ENCODE measurements at regions of chr7 and their contacts with region 1.

Region 1: DNA sequence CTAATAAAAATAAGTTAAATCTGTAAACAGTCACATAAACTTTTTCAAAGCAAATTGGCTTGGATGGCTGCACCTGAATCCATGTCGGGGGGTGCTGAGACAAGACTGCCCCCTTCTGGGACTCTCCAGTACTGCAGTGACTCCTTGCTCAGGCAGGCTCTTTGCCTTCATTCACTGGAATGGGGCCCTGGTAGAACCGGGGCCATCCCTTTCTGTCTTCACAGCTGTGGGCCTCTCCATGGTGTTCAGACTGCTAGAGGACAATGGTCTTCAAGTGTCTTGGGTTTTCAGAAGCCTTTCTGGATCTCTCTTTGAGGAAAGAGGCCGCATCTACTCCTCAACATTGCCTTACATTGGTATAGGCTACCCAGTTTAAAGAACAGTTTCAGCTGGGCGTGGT is 16.1 kb upstream of the IMPDH1 start:
- DNase-seq: peak; percentile 64 to 80 (median 66)
- H3K4me3 ChIP-seq: no peak overlapping the region
- H3K27ac ChIP-seq: no peak overlapping the region
- H3K4me1 ChIP-seq: peaks cover 0 to 10% (median 0%) of the 10 kb centered on the region in 4 experiments
- H3K27me3 ChIP-seq: no peaks in the 10 kb centered on the region

Region 2: DNA sequence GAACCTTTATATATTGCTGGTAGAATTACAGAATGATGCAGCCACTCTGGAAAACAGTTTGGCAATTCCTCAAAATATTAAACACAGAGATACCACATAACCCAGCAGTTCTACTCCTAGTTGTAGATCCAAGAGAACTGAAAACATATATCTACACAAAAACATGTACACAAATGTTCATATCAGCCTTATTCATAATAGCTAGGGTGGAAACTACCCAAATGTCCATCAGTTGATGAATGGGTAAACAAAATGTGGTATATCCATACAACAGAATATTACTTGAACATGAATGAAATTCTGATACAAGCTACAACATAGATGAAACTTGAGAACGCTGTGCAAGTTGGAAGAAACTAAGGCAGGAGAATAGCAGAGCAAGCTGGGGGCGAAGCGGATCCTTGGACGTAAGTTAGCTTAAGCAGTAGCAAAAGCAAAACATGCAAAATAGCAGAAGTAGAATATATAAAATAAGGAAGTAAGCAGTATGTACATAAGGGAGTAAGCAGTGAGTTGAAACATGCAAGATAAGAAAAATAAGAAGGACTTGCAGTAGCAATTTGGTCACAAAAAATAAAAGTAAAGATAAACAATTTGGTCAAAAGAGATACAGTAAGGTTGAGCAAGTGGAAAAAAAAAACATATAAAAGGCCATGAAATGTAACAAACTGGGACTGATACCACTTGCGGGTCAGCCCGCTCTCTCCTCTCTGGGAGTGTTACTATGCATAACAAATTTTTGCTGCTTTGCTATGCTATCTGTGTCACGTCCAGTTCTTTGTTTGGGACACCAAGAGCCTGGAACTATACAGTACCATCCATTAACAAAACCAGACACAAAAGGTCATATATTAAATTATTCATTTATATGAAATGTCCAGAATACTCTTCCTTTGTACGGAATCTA is 11.8 kb after region 1 on chr7:
- CTCF ChIA-PET with region 1: interaction called, 51 read pairs
- POLR2A ChIA-PET with region 1: no interaction called
- DNase-seq: peak in 2 of 3 donors; percentile 52 to 66
- H3K4me3 ChIP-seq: no peak overlapping the region
- H3K27ac ChIP-seq: peak overlapping the region in 1 of 2 experiments; percentile 63
- H3K4me1 ChIP-seq: peaks cover 0 to 9% (median 5%) of the 10 kb centered on the region in 4 experiments
- H3K27me3 ChIP-seq: no peaks in the 10 kb centered on the region

Region 3: DNA sequence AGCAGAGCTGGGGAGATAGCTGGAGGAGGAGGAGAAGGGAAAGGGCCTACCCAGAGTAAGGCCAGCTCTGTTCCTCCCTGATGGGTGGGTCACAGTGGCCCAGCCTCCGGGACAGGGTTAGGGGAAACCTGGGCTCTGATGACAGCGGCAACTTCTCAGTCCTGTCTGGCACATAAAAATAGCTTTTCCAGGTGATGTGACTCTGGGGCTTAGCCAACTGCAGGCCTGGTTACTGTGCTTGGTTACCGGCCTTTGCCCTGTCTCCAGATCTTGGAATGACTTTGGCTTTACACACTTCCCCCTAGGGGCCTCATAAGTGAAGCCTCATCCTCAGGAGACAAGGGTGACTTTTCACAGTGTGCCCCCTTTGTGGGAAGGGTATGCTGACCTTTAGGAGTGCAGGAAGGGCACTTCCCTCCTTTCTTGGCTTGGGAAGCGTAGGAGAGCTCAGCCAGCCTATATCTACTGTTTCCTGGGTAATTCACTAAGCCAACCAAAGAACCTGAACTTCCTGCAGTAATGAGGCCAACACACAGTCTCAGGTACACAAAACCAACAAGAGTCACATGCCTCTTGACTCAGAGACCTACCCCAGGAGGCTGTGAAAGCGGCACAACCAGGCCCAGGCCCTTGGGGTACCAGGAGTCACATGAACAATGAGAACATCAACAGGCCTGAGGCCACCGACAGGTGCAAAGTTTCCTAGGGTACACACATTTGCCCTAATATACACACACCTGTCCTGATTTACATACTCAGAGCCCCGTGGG is 18.2 kb after region 1 on chr7:
- CTCF ChIA-PET with region 1: interaction called, 51 read pairs
- POLR2A ChIA-PET with region 1: no interaction called
- DNase-seq: no peak
- H3K4me3 ChIP-seq: no peak overlapping the region
- H3K27ac ChIP-seq: no peak overlapping the region
- H3K4me1 ChIP-seq: no peaks in the 10 kb centered on the region
- H3K27me3 ChIP-seq: no peaks in the 10 kb centered on the region

Region 4: DNA sequence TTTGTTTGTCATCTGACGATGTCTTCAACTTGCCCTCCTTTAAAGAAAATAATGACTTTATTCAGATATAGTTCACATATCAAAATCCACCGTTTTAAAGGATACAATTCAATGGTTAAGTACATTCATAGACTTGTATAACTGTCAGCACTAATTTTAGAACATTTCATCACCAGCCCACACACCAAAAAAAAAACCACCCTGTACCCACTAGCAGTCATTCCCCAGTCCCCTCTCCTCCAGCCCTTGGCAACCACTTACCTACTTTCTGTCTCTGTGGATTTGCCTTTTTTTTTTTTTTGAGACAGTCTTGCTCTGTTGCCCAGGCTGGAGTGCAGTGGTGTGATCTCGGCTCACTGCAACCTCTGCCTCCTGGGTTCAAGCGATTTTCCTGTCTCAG is 24.6 kb after region 1 on chr7:
- CTCF ChIA-PET with region 1: interaction called, 56 read pairs
- POLR2A ChIA-PET with region 1: no interaction called
- DNase-seq: peak in 2 of 3 donors; percentile 19 to 20
- H3K4me3 ChIP-seq: no peak overlapping the region
- H3K27ac ChIP-seq: no peak overlapping the region
- H3K4me1 ChIP-seq: peaks cover 3 to 4% (median 4%) of the 10 kb centered on the region in 4 experiments
- H3K27me3 ChIP-seq: peaks cover 0 to 4% (median 0%) of the 10 kb centered on the region in 5 experiments

Region 5: GRCh38 chr7:128455551-128456254 is 29.9 kb after region 1 on chr7 and contains the start of gene HILPDA:
- CTCF ChIA-PET with region 1: interaction called, 273 read pairs
- POLR2A ChIA-PET with region 1: interaction called, 4 read pairs
- DNase-seq: peak; percentile 85 to 92 (median 92)
- H3K4me3 ChIP-seq: peak within 1 kb of the TSS; percentile 77 to 98 (median 88)
- H3K27ac ChIP-seq: peak within 1 kb of the TSS in 1 of 2 experiments; percentile 85
- H3K4me1 ChIP-seq: peaks cover 7 to 32% (median 21%) of the 10 kb centered on the region in 4 experiments
- H3K27me3 ChIP-seq: peaks cover 0 to 4% (median 0%) of the 10 kb centered on the region in 5 experiments